ENCODE measurements at regions of chr3 and their contacts with region 1.

Region 1: GRCh38 chr3:7144696-7145308 is 283.9 kb downstream of the GRM7 start:
- DNase-seq: peak; percentile 12
- H3K4me3 ChIP-seq: no peak overlapping the region
- H3K27ac ChIP-seq: no peak overlapping the region
- H3K4me1 ChIP-seq: no peaks in the 10 kb centered on the region
- H3K27me3 ChIP-seq: no peaks in the 10 kb centered on the region
- CTCF ChIP-seq: peak; percentile 49 to 66

Region 2: DNA sequence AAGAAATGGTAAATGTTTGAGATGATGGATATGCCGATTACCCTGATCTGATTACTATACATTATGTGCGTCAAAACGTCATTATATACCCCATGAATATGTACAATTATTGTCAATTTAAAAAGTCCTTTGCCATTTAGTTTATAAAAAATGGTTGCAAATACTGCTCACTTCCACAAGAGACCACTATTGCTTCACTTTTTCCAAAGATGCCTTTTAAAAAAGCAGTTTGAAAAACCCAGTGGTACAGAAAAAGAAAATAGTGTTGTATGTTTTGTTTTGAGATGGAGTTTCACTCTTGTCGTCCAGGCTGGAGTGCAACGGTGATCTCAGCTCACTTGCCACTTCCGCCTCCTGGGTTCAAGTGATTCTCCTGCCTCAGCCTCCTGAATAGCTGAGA is 1918.0 kb before region 1 on chr3:
- CTCF ChIA-PET with region 1: no interaction called
- dilution Hi-C with region 1: no loop called
- in situ Hi-C with region 1: no loop called
- intact Hi-C with region 1: loop called (anchors 5 kb)
- DNase-seq: no peak
- H3K4me3 ChIP-seq: no peak overlapping the region
- H3K27ac ChIP-seq: no peak overlapping the region
- H3K4me1 ChIP-seq: no peaks in the 10 kb centered on the region
- H3K27me3 ChIP-seq: no peaks in the 10 kb centered on the region
- CTCF ChIP-seq: peak; percentile 41 to 43

Region 3: GRCh38 chr3:6791161-6791560 is 353.6 kb before region 1 on chr3:
- CTCF ChIA-PET with region 1: no interaction called
- dilution Hi-C with region 1: no loop called
- in situ Hi-C with region 1: no loop called
- intact Hi-C with region 1: loop called (anchors 5 kb)
- DNase-seq: no peak
- H3K4me3 ChIP-seq: no peak overlapping the region
- H3K27ac ChIP-seq: no peak overlapping the region
- H3K4me1 ChIP-seq: no peaks in the 10 kb centered on the region
- H3K27me3 ChIP-seq: no peaks in the 10 kb centered on the region
- CTCF ChIP-seq: peak; percentile 19 to 20

Region 4: DNA sequence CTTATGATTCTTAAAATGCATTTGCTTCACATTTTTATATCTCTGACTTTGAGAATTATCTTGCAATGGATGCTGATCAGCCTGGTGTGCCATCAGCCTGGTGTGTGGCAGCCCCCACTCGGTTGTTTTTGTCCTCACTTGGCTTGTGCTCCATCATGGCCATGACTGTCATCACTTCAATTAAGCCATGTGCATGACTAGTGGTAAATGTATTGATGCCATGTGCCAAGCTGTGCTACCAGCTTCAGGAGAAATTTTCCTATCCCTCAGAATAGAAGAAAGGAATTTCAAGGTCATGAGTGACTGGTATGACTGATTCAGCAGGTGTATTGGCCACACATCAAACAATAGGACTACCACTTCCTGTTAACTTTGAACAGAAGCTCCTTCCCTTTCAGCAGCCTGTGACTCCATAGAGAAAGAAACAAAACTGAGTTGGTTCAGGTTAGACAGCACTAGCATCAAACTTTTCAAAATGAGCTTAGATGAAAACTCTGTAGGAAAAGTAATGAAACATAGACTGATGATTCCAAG is 32.2 kb before region 1 on chr3:
- CTCF ChIA-PET with region 1: no interaction called
- dilution Hi-C with region 1: no loop called
- in situ Hi-C with region 1: no loop called
- intact Hi-C with region 1: no loop called
- DNase-seq: no peak
- H3K4me3 ChIP-seq: no peak overlapping the region
- H3K27ac ChIP-seq: no peak overlapping the region
- H3K4me1 ChIP-seq: no peaks in the 10 kb centered on the region
- H3K27me3 ChIP-seq: no peaks in the 10 kb centered on the region
- CTCF ChIP-seq: no peak

Region 5: DNA sequence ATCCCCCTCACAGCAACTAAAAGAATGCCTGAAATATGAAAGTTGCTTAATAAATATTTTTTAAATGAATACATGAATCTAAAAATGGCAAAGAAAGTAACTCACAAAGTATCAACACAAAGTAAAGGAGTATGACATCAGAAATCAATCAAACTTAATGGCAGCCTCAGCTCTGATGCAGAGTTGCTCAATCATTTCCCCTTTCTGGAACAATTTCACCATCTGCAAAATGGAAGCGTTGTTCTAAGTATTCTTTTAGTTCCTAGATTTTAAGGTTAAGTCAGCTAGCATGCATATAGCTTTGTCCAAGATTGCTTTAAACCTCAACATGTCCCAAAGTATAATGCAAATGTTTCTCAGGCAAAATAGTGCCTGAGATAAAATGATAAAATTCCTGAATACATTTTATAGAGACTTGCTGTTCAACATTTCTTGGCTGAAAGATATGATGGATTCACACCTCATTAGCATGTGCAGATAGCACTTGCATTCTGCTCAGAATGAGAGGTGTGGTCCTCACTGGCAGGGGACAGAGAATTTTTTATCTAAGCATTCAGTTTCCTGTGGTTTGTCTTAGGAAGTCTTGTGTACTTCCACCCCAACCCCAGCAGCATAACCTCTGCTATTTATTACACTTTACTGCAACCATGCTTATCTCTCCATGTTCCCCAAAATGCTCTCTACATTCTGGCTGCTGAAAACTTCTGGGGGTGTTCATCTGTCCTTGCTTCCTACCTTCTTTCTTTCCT is 145.4 kb after region 1 on chr3:
- CTCF ChIA-PET with region 1: no interaction called
- dilution Hi-C with region 1: no loop called
- in situ Hi-C with region 1: no loop called
- intact Hi-C with region 1: no loop called
- DNase-seq: no peak
- H3K4me3 ChIP-seq: no peak overlapping the region
- H3K27ac ChIP-seq: no peak overlapping the region
- H3K4me1 ChIP-seq: no peaks in the 10 kb centered on the region
- H3K27me3 ChIP-seq: no peaks in the 10 kb centered on the region
- CTCF ChIP-seq: no peak

Measured in mammary epithelial cell (primary cell).